ENCODE measurements at regions of chr6 and their contacts with region 1.

Region 1: GRCh38 chr6:35146453-35146852 is 5.3 kb upstream of the TCP11 start:
- DNase-seq: peak in 1 of 2 donors; percentile 35
- ATAC-seq: peak in 1 of 3 donors; percentile 36
- H3K4me3 ChIP-seq: no peak overlapping the region
- H3K4me3 Mint-ChIP-seq: no peak overlapping the region
- H3K27ac ChIP-seq: no peak overlapping the region
- H3K27ac Mint-ChIP-seq: no peak overlapping the region
- H3K4me1 ChIP-seq: no peaks in the 10 kb centered on the region
- H3K4me1 Mint-ChIP-seq: peaks cover 0 to 4% of the 10 kb centered on the region in 2 donors
- H3K27me3 ChIP-seq: peaks cover 2% of the 10 kb centered on the region
- H3K27me3 Mint-ChIP-seq: peaks cover 0 to 6% of the 10 kb centered on the region in 2 donors
- CTCF ChIP-seq: no peak

Region 2: GRCh38 chr6:35202066-35202546 is 55.7 kb after region 1 on chr6:
- intact Hi-C with region 1: loop called (anchors 2 kb)
- DNase-seq: no peak
- ATAC-seq: no peak
- H3K4me3 ChIP-seq: no peak overlapping the region
- H3K4me3 Mint-ChIP-seq: no peak overlapping the region
- H3K27ac ChIP-seq: no peak overlapping the region
- H3K27ac Mint-ChIP-seq: no peak overlapping the region
- H3K4me1 ChIP-seq: no peaks in the 10 kb centered on the region
- H3K4me1 Mint-ChIP-seq: no peaks in the 10 kb centered on the region
- H3K27me3 ChIP-seq: peaks cover 4% of the 10 kb centered on the region
- H3K27me3 Mint-ChIP-seq: peaks cover 19 to 69% of the 10 kb centered on the region in 2 donors
- CTCF ChIP-seq: no peak

Region 3: DNA sequence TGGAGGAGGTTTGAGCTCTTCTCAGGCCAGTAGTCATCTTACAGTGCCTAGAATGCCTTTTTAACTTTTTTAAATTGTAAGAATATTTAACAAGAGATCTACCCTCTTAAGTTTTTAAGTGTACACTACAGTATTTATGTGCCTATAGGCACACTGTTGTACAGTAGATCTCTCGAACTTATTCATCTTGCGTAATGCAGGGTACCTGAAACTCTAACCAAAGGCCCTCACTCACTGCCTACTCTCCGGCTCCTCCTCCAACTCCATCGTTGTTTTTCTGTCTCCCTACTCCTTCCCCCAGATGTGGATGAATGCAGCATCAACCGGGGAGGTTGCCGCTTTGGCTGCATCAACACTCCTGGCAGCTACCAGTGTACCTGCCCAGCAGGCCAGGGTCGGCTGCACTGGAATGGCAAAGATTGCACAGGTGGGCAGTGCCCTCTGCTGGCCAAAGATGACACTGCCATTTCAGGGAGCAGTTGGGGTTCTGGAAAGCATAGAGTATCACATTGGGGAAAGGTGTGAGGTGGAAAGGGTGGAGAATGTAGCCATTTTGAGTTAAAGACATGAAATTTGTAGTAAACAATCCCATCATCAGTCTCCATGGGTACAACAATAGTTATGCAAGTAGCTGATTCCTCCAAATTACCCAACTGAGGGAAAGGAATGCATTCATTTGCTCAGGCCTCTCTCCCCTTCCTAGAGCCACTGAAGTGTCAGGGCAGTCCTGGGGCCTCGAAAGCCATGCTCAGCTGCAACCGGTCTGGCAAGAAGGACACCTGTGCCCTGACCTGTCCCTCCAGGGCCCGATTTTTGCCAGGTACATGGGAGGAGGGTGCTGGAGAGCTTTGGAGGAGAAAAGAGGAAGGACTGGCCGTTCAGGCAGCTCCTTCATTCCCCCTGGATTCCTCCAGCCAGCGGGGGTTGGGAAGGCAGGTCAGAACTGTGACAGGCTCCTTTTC is 94.7 kb after region 1 on chr6:
- intact Hi-C with region 1: loop called (anchors 2 kb)
- DNase-seq: peak; percentile 66 to 81
- ATAC-seq: peak; percentile 77 to 93 (median 91)
- H3K4me3 ChIP-seq: no peak overlapping the region
- H3K4me3 Mint-ChIP-seq: no peak overlapping the region
- H3K27ac ChIP-seq: no peak overlapping the region
- H3K27ac Mint-ChIP-seq: peak overlapping the region in 1 of 2 donors; percentile 25
- H3K4me1 ChIP-seq: no peaks in the 10 kb centered on the region
- H3K4me1 Mint-ChIP-seq: peaks cover 6 to 20% of the 10 kb centered on the region in 2 donors
- H3K27me3 ChIP-seq: no peaks in the 10 kb centered on the region
- H3K27me3 Mint-ChIP-seq: no peaks in the 10 kb centered on the region
- CTCF ChIP-seq: peak; percentile 95

Measured in natural killer cell (primary cell).